ENCODE measurements at regions of chr17 and their contacts with region 1.

Region 1: DNA sequence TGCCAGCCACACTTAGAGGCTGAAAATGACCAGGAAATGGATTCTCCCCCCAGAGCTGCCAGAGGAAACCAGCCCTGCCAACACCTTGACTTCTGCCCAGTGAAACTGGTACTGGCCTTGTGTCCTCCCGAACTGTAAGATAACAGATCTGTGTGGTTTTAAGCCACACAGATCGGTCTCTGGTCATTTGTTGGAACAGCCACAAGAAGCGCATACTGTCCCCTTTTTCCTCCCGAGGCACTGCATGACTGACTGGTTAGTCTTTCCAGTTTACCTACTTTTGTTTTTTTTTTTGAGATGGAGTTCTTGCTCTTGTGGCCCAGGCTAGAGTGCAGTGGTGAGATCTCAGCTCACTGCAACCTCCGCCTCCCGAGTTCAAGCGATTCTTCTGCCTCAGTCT is 5.5 kb downstream of the QRICH2 start:
- DNase-seq: no peak
- H3K4me3 ChIP-seq: no peak overlapping the region
- H3K27ac ChIP-seq: no peak overlapping the region
- H3K4me1 ChIP-seq: no peaks in the 10 kb centered on the region
- H3K27me3 ChIP-seq: no peaks in the 10 kb centered on the region
- CTCF ChIP-seq: no peak

Region 2: DNA sequence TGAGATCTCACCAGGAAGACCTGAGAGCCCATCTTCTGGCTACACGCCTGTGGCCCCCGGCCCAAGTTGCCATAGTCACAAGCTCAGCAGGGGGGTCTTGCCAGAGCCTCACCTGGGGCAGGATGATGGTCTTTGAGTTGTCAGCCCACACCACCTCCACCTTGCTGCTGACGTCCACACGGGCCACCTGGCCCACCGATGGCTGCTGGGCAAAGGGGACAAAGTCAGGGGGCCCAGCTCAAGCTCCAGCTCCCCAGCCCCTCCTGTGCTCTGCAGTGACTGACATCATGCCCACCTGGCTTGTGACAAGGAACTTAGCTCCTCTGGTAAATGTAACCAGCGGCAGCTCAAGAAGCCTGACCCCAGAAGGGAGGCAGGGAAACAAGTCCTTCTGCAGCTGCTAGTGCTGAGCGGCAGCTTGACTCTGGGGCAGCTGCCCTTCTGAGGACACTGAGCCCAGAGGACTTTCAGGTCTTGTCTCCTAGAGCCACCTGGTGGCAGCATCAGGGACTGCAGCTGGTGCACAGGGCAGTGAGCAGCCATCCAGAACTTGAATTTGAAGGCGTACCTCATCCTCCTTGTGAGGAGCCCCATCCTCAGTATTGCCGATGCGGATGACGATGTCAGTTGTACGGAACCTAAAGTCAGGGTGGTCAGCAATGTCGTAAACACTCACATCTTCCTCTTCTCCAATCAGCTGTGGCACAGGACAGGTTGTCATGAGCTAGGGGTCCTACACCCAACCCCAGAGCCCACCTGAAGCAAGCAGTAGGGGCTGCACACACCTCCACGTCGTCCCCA is 95.3 kb after region 1 on chr17:
- intact Hi-C with region 1: loop called (anchors 1 kb)
- DNase-seq: peak; percentile 91 to 96
- H3K4me3 ChIP-seq: no peak overlapping the region
- H3K27ac ChIP-seq: no peak overlapping the region
- H3K4me1 ChIP-seq: no peaks in the 10 kb centered on the region
- H3K27me3 ChIP-seq: no peaks in the 10 kb centered on the region
- CTCF ChIP-seq: peak; percentile 97 to 99

Measured in tibial artery (tissue), 4 donors.